ENCODE measurements at regions of chr1 and their contacts with region 1.

Region 1: GRCh38 chr1:167542109-167543032 is 11.2 kb downstream of the CREG1 start:
- DNase-seq: no peak
- ATAC-seq: no peak
- H3K4me3 ChIP-seq: no peak overlapping the region
- H3K27ac ChIP-seq: peak overlapping the region in 1 of 2 experiments; percentile 12; a peak in 1 of 6 replicates
- H3K4me1 ChIP-seq: peaks cover 17% of the 10 kb centered on the region; the same call in 2 of the 3 replicates
- CTCF ChIP-seq: no peak
- EP300 ChIP-seq: no peak
- POLR2A ChIP-seq: no peak
- RAD21 ChIP-seq: no peak

Region 2: DNA sequence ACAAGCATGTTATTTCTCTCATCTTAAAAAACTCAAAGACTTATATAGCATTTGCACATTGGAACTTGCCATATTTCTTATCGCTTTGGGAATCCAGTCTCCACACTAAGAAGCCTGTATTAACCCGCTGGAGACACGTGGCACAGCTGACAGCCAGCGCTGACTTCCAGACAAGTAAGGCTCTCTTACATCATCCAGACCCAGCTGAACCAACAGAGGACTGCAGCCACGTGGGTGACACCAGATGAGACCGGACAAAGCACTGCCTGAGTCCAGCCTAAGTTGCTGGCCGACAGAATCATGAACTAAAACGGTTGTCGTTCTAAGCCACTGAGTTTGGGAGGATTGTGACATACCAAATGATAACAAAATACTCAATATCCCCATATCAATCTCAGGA is 17.7 kb before region 1 on chr1:
- CTCF ChIA-PET with region 1: interaction called, 17 read pairs
- POLR2A ChIA-PET with region 1: no interaction called
- DNase-seq: no peak
- ATAC-seq: no peak
- H3K4me3 ChIP-seq: no peak overlapping the region
- H3K27ac ChIP-seq: no peak overlapping the region
- H3K4me1 ChIP-seq: no peaks in the 10 kb centered on the region
- CTCF ChIP-seq: no peak
- EP300 ChIP-seq: no peak
- POLR2A ChIP-seq: no peak
- RAD21 ChIP-seq: no peak

Region 3: GRCh38 chr1:167553136-167554027 is 11.0 kb after region 1 on chr1 and contains the start of gene CREG1:
- CTCF ChIA-PET with region 1: interaction called, 34 read pairs
- POLR2A ChIA-PET with region 1: interaction called, 11 read pairs
- DNase-seq: peak; percentile 93 to 96
- ATAC-seq: peak; percentile 95 to 100
- H3K4me3 ChIP-seq: peak within 1 kb of the TSS; percentile 68
- H3K27ac ChIP-seq: peak within 1 kb of the TSS; percentile 77 to 95
- H3K4me1 ChIP-seq: peaks cover 21% of the 10 kb centered on the region
- CTCF ChIP-seq: no peak
- EP300 ChIP-seq: no peak
- POLR2A ChIP-seq: peak; percentile 90
- RAD21 ChIP-seq: no peak
- polyA plus RNA-seq, gene CREG1: 129 and 132 TPM in 2 replicates

Region 4: DNA sequence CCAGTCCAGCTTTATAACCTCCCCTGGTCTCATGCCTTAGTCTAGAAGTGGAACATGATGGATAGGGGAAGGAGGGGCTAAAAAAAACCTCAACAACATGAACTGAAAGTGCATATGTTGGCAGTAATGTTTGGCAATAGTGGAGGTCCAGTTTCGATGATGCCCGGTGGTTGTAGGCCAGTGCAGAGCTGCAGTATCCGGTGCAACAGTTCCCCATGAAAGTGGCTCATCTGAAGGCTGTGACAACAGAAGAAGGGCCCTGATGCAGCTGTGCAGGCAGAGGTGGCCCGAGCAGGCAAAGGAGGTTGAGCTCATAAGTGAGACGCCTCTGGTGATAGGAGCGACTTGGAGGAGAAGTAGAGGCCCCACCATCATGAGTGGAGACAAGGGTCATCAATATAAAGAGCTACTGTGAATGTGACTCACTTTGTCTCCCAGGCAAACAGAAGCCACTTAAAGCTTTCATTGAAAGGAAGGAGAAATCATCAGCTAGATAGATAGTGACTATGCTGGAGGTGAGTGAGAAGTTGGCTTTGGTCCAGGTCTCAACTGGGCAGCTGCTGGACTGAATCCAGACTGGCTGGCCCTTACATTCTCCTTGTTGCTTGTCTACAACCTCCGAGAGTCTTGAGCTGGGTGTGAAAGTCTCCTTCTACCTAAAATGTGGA is 21.3 kb after region 1 on chr1:
- CTCF ChIA-PET with region 1: interaction called, 11 read pairs
- POLR2A ChIA-PET with region 1: interaction called, 7 read pairs
- DNase-seq: no peak
- ATAC-seq: no peak
- H3K4me3 ChIP-seq: no peak overlapping the region
- H3K27ac ChIP-seq: peak overlapping the region in 1 of 2 experiments; percentile 66; a peak in 2 of 6 replicates
- H3K4me1 ChIP-seq: peaks cover 13% of the 10 kb centered on the region; the same call in 2 of the 3 replicates
- CTCF ChIP-seq: no peak
- EP300 ChIP-seq: no peak
- POLR2A ChIP-seq: no peak
- RAD21 ChIP-seq: no peak

Measured in A549 (cell line).